Ascending aorta (tissue), 2 donors: ENCODE measurements at regions of chr2 and their contacts with region 1.

Region 1: DNA sequence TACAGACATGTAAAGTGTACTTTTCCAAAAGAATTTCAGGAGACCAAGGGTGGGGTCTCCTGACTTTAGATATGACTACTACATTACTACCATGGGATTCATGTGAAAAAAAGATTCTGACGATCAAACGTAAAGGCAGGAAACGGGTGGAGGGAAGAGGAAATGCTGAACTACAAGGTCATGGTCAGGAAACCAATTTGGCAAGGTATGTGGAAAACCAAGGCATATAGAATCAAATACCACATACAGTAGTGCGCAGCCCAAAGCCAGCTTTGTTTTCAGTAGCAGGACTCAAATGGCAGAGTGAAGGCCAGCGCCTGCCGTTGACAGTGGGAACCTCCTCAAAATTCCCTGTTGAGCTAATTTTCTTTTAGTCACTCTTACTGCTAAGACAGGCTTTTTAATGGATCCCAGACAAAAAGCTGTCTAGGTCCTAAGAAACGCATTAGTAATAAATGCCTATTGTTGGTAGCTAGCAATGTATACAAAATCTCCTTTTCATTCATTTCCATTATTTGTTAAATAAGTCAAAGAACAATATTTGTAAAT is 57.6 kb upstream of the SERTAD2 start:
- DNase-seq: no peak
- H3K4me3 ChIP-seq: no peak overlapping the region
- H3K27ac ChIP-seq: no peak overlapping the region
- H3K4me1 ChIP-seq: no peaks in the 10 kb centered on the region
- H3K27me3 ChIP-seq: no peaks in the 10 kb centered on the region
- CTCF ChIP-seq: no peak

Region 2: DNA sequence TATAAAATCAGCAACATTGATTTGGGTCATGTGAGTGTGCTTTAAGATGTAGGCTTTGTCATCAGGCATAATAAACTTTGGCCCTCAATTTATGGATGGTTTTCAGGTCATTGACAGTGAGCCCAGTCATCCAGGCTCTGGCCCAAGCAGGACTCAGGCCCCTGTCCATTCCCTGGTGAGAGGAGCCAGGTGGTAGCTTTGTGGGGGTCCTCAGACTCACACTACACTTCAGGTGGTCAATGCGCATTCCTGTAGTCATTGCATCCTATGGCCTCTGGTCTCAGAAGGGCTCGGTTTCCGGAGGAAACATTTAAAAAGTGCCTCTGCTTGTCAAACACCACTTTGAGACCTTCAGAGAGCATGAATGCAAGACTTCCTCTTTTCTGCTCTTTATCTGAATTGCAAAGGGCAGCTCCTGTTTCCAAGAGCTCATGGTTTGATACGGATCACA is 237.2 kb before region 1 on chr2:
- intact Hi-C with region 1: no loop called
- DNase-seq: no peak
- H3K4me3 ChIP-seq: no peak overlapping the region
- H3K27ac ChIP-seq: no peak overlapping the region
- H3K4me1 ChIP-seq: no peaks in the 10 kb centered on the region
- H3K27me3 ChIP-seq: no peaks in the 10 kb centered on the region
- CTCF ChIP-seq: no peak

Region 3: DNA sequence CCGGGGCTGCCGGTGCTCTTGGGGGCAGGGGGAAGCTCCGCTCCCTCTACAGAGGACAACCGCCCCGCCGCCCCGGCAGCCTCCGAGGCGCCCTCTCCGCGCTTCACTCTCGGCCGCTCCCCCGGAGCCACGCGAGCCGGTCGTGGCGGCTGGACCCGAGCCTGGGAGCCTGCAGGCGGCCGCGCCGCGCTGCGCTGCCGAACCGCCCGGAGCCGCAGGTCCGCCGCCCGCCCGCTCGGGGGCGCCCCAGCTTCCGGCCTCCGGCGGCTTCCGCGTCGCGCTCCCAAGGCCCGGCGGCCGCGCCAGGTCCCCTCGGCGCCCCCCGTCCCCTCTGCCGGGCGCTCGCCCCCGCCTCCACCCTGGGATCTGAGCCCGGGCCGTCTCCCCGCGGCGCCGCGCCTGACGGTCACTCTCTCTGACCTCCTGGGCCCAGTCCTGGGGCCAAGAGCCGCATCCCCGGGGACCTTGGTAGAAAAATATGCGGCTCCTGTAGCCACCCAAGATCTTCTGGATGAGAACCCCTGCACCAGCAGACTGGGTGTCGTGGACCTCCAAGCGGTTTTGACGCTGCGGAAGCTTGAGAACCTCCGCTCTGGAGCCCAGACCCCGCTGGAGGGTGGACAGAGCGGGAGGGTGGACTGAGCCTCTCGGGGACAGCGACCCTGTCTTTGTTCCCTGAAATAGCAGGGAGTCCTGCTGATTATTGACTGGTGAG is 101.9 kb before region 1 on chr2:
- intact Hi-C with region 1: no loop called
- DNase-seq: peak in 1 of 2 donors; percentile 61
- H3K4me3 ChIP-seq: peak overlapping the region; percentile 70 to 93
- H3K27ac ChIP-seq: peak overlapping the region; percentile 61 to 71
- H3K4me1 ChIP-seq: peaks cover 6 to 15% of the 10 kb centered on the region in 2 donors
- H3K27me3 ChIP-seq: no peaks in the 10 kb centered on the region
- CTCF ChIP-seq: peak in 2 of 3 experiments; percentile 29 to 75

Region 4: DNA sequence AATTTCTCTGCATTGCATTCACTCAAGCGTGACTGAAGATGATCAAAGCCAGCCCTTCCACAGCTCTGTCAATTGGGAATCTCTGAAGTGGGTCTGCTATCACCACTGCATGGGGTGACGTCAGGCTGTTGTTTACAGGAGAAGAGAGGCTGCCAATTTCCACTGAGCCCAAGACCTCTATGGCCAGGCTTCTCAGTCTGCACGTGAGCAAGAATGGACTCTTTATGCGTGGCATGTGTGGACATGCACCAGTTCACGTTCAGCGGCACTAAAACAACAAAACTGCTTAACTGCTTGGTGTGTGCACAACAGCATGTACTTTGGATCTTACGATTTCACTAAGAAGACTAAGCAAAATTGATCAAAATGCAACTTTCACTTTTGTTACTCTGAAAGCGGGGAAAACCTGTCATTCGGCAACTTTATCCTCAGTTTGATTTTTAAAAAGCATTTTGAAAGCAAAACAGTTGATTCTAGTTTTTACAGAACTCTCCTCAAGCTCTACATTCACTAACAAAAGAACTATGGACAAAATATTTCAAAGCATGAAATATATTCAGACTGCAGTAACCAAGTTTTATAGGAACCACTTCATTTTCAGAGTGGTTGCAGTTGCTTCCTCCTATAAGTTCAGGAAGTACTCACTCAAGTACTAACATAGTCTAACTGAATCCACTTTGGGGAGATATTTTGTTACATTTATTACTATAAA is 19.4 kb after region 1 on chr2:
- intact Hi-C with region 1: loop called (anchors 1 kb)
- DNase-seq: peak; percentile 38 to 80
- H3K4me3 ChIP-seq: peak overlapping the region; percentile 50 to 59
- H3K27ac ChIP-seq: peak overlapping the region; percentile 60 to 63
- H3K4me1 ChIP-seq: peaks cover 3 to 14% of the 10 kb centered on the region in 2 donors
- H3K27me3 ChIP-seq: no peaks in the 10 kb centered on the region
- CTCF ChIP-seq: no peak